ENCODE measurements at regions of chr7 and their contacts with region 1.

Region 1: DNA sequence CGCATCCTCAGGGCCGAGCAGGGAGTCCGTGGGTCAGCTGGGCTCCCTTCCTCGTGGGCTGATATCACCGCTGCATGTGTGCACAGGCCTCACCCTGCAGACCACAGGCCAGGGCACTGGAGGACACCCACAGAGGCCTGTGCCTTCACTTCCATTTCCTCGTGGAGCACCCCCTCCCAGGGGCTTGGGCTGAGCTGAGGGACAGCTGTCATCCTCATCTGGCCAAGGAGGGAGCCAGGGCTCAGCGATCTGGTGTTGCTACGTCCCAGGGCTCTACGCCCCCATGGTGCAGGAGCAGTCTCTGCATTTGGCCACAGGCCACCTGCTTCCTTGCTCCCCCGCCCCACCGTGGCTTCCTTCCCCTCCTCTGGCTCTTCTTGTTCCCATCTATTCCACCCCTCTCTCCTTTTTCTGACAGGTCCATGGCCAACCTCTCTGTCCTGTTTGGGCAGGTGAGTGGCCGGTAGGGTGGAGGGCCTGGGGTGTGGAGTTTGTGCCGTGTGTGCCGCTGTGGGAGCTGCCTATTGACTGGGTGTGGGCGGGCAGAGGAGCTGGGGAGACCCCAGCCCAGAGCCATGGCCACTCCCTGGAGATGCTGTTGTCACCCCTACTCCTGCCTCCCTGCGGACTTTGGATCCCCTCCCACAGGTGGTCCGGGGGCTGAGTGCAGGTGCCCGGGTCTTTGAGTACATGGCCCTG is 8.3 kb upstream of the ASIC3 start:
- DNase-seq: no peak
- H3K4me3 ChIP-seq: no peak overlapping the region
- H3K4me3 Mint-ChIP-seq: no peak overlapping the region
- H3K27ac ChIP-seq: no peak overlapping the region
- H3K27ac Mint-ChIP-seq: no peak overlapping the region
- H3K4me1 ChIP-seq: peaks cover 13% of the 10 kb centered on the region
- H3K4me1 Mint-ChIP-seq: peaks cover 0 to 13% (median 11%) of the 10 kb centered on the region in 4 donors
- H3K27me3 ChIP-seq: no peaks in the 10 kb centered on the region
- H3K27me3 Mint-ChIP-seq: no peaks in the 10 kb centered on the region

Region 2: GRCh38 chr7:150311711-150312110 is 728.3 kb before region 1 on chr7:
- CTCF ChIA-PET with region 1: no interaction called
- POLR2A ChIA-PET with region 1: no interaction called
- intact Hi-C with region 1: loop called (anchors 5 kb)
- DNase-seq: no peak
- H3K4me3 ChIP-seq: no peak overlapping the region
- H3K4me3 Mint-ChIP-seq: no peak overlapping the region
- H3K27ac ChIP-seq: no peak overlapping the region
- H3K27ac Mint-ChIP-seq: no peak overlapping the region
- H3K4me1 ChIP-seq: no peaks in the 10 kb centered on the region
- H3K4me1 Mint-ChIP-seq: peaks cover 0 to 7% (median 3%) of the 10 kb centered on the region in 4 donors
- H3K27me3 ChIP-seq: no peaks in the 10 kb centered on the region
- H3K27me3 Mint-ChIP-seq: no peaks in the 10 kb centered on the region

Region 3: GRCh38 chr7:150988230-150989226 is 51.5 kb before region 1 on chr7:
- CTCF ChIA-PET with region 1: no interaction called
- POLR2A ChIA-PET with region 1: no interaction called
- intact Hi-C with region 1: no loop called
- DNase-seq: peak; percentile 53 to 72 (median 70)
- H3K4me3 ChIP-seq: peak overlapping the region in 1 of 2 donors; percentile 47
- H3K4me3 Mint-ChIP-seq: peak overlapping the region; percentile 55 to 85 (median 75)
- H3K27ac ChIP-seq: no peak overlapping the region
- H3K27ac Mint-ChIP-seq: peak overlapping the region; percentile 23 to 95 (median 83)
- H3K4me1 ChIP-seq: peaks cover 35% of the 10 kb centered on the region
- H3K4me1 Mint-ChIP-seq: peaks cover 18 to 50% (median 31%) of the 10 kb centered on the region in 4 donors
- H3K27me3 ChIP-seq: no peaks in the 10 kb centered on the region
- H3K27me3 Mint-ChIP-seq: no peaks in the 10 kb centered on the region